CD4-positive, alpha-beta T cell (primary cell): ENCODE measurements at regions of chr4 and their contacts with region 1.

Region 1: GRCh38 chr4:177367336-177367735 is 57.7 kb downstream of the NEIL3 start:
- DNase-seq: peak in 3 of 14 experiments; percentile 13 to 39 (median 33)
- ATAC-seq: peak; percentile 62
- H3K4me3 ChIP-seq: no peak overlapping the region
- H3K4me3 Mint-ChIP-seq: no peak overlapping the region
- H3K27ac ChIP-seq: no peak overlapping the region
- H3K27ac Mint-ChIP-seq: no peak overlapping the region
- H3K4me1 ChIP-seq: no peaks in the 10 kb centered on the region
- H3K4me1 Mint-ChIP-seq: no peaks in the 10 kb centered on the region
- H3K27me3 ChIP-seq: no peaks in the 10 kb centered on the region
- H3K27me3 Mint-ChIP-seq: no peaks in the 10 kb centered on the region
- CTCF ChIP-seq: peak; percentile 44

Region 2: GRCh38 chr4:176981551-176981950 is 385.8 kb before region 1 on chr4:
- CTCF ChIA-PET with region 1: no interaction called
- POLR2A ChIA-PET with region 1: no interaction called
- intact Hi-C with region 1: no loop called
- DNase-seq: peak in 2 of 14 experiments; percentile 11 to 16
- ATAC-seq: no peak
- H3K4me3 ChIP-seq: no peak overlapping the region
- H3K4me3 Mint-ChIP-seq: no peak overlapping the region
- H3K27ac ChIP-seq: no peak overlapping the region
- H3K27ac Mint-ChIP-seq: no peak overlapping the region
- H3K4me1 ChIP-seq: no peaks in the 10 kb centered on the region
- H3K4me1 Mint-ChIP-seq: no peaks in the 10 kb centered on the region
- H3K27me3 ChIP-seq: no peaks in the 10 kb centered on the region
- H3K27me3 Mint-ChIP-seq: no peaks in the 10 kb centered on the region
- CTCF ChIP-seq: no peak

Region 3: DNA sequence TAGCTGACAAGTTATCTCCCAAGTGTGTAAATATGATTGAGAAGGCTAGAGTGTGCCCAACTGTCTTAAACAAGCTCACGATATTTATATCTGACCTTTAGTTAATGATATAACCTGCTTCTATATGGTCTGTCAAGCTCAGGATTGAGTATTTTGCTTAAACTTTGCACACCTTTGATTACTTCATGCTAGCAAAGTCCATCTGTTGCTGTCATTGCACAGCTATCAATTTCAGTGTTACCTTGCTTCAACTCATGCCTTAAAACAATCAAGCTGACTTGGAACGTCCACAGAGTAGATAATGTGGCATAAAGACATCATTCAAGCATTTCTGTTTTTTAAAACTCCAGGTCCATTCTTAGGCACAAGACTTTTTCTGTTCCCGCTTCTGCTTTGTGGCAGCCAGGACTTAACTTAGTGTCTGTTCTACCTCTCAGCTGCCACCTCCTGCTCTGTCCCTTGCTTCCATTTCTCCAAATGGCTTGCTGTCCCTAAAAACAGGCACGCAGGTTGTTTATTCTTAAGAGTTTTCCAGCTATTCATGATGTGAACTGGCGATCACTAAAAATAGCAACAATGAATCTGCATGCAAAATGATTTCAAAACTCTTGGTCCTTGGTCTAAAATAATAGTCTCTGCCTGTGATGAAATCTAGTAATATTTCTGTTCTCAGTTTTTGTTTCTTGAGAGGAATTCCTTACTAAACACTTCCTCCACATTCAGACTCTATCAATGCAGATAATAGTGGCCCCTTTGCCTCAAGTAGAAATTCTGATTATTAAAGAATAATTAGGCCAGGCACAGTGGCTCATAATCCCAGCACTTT is 73.9 kb before region 1 on chr4:
- CTCF ChIA-PET with region 1: no interaction called
- POLR2A ChIA-PET with region 1: no interaction called
- intact Hi-C with region 1: no loop called
- DNase-seq: no peak
- ATAC-seq: no peak
- H3K4me3 ChIP-seq: no peak overlapping the region
- H3K4me3 Mint-ChIP-seq: no peak overlapping the region
- H3K27ac ChIP-seq: no peak overlapping the region
- H3K27ac Mint-ChIP-seq: no peak overlapping the region
- H3K4me1 ChIP-seq: no peaks in the 10 kb centered on the region
- H3K4me1 Mint-ChIP-seq: no peaks in the 10 kb centered on the region
- H3K27me3 ChIP-seq: peaks cover 0 to 5% of the 10 kb centered on the region in 2 experiments
- H3K27me3 Mint-ChIP-seq: no peaks in the 10 kb centered on the region
- CTCF ChIP-seq: no peak

Region 4: DNA sequence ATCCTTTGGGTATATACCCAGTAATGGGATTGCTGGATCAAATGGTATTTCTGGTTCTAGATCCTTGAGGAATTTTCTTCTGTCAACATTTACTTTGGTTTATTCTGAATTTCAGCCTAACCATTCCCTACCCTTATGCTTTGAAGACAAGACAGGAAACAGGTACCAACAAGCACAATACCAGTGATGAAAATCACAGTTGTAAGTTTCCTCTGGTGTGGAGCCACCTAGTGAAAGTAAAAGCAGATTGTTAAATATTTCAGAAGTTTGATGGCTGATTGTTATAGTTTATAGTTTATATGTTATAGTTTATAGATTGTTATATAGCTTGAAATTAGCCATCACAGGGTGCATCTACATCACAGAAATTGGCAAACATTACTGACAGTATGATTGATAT is 179.4 kb after region 1 on chr4:
- CTCF ChIA-PET with region 1: no interaction called
- POLR2A ChIA-PET with region 1: no interaction called
- intact Hi-C with region 1: loop called in 1 of 2 experiments (anchors 5 kb)
- DNase-seq: no peak
- ATAC-seq: no peak
- H3K4me3 ChIP-seq: no peak overlapping the region
- H3K4me3 Mint-ChIP-seq: no peak overlapping the region
- H3K27ac ChIP-seq: no peak overlapping the region
- H3K27ac Mint-ChIP-seq: no peak overlapping the region
- H3K4me1 ChIP-seq: no peaks in the 10 kb centered on the region
- H3K4me1 Mint-ChIP-seq: no peaks in the 10 kb centered on the region
- H3K27me3 ChIP-seq: no peaks in the 10 kb centered on the region
- H3K27me3 Mint-ChIP-seq: no peaks in the 10 kb centered on the region
- CTCF ChIP-seq: no peak